SK-N-SH (cell line): ENCODE measurements at regions of chr11 and their contacts with region 1.

Region 1: DNA sequence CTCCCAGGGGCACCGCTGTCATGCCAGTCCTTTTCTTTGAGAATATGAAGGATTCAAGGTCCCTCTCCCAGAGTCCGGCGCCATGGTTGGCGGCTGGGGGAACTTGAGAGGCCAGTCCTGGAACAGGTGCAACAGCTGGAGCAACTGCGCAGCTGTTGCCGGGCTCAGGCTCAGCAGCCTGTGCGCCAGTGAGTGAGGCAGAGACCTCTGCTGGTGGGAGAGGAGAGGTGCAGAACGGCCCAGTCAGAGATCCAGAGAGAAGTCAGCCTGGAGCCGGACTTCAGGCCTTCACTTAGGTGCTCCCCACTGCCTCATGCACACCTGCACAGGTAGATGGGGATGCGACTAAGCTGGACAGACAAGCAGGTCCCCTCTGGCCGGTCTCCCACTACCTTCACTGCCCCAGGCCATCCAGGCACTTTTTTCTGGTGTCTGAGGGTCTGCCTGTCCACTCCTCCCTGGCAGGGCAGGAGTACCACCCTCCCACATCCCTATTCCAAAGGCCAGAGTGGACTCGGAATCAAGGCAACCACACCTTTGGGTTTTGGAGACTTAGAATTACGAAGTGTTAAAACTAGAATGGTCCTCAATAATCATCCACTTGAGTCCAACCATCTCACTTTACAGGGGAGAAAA is 4.6 kb downstream of the CHRDL2 start:
- DNase-seq: peak; percentile 87
- H3K4me3 ChIP-seq: peak overlapping the region in 1 of 2 experiments; percentile 17; a peak in 1 of 4 replicates
- H3K27ac ChIP-seq: no peak overlapping the region
- H3K4me1 ChIP-seq: no peaks in the 10 kb centered on the region; a peak in 1 of 4 replicates
- H3K27me3 ChIP-seq: peaks cover 24% of the 10 kb centered on the region
- CTCF ChIP-seq: peak; percentile 86
- EP300 ChIP-seq: no peak
- RAD21 ChIP-seq: peak; percentile 89

Region 2: DNA sequence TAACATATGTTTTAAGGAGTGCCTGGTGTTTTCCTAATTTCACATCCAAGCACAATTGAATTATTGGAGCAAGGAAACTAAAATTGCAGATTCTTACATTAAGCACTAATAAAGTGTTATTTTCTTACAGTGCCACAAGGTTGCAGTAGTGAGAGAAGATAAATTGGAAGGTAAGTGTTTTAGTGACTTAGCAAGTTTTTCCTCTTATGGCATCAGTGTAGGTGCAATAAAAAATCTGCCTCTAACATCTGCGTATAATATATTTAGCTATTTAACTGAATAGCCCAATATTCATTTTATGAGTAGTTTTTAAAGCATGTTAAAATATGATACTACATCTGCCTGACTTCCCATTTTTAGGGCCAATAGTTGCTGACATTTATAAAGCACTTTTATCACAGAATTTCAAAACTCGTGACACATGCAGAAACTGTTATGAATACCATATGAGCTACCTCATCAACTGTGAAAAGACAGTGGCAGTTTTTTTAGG is 115.2 kb before region 1 on chr11:
- CTCF ChIA-PET with region 1: interaction called, 26 read pairs
- POLR2A ChIA-PET with region 1: no interaction called
- DNase-seq: peak; percentile 29
- H3K4me3 ChIP-seq: no peak overlapping the region
- H3K27ac ChIP-seq: peak overlapping the region in 1 of 2 experiments; percentile 44; a peak in 2 of 4 replicates
- H3K4me1 ChIP-seq: no peaks in the 10 kb centered on the region
- H3K27me3 ChIP-seq: no peaks in the 10 kb centered on the region
- CTCF ChIP-seq: peak; percentile 71
- EP300 ChIP-seq: no peak
- RAD21 ChIP-seq: peak; percentile 51

Region 3: GRCh38 chr11:74634537-74634936 is 92.1 kb before region 1 on chr11:
- CTCF ChIA-PET with region 1: interaction called, 17 read pairs
- POLR2A ChIA-PET with region 1: no interaction called
- DNase-seq: no peak
- H3K4me3 ChIP-seq: no peak overlapping the region
- H3K27ac ChIP-seq: no peak overlapping the region
- H3K4me1 ChIP-seq: peaks cover 0 to 14% of the 10 kb centered on the region in 2 experiments; a peak in 2 of 4 replicates
- H3K27me3 ChIP-seq: no peaks in the 10 kb centered on the region
- CTCF ChIP-seq: peak; percentile 48
- EP300 ChIP-seq: no peak
- RAD21 ChIP-seq: peak; percentile 48

Region 4: GRCh38 chr11:74739546-74740270 is 13.0 kb after region 1 on chr11:
- CTCF ChIA-PET with region 1: interaction called, 27 read pairs
- POLR2A ChIA-PET with region 1: no interaction called
- DNase-seq: peak; percentile 74
- H3K4me3 ChIP-seq: no peak overlapping the region
- H3K27ac ChIP-seq: no peak overlapping the region
- H3K4me1 ChIP-seq: no peaks in the 10 kb centered on the region
- H3K27me3 ChIP-seq: no peaks in the 10 kb centered on the region
- CTCF ChIP-seq: peak; percentile 61
- EP300 ChIP-seq: no peak
- RAD21 ChIP-seq: peak; percentile 57

Region 5: GRCh38 chr11:74749128-74749964 is 22.7 kb after region 1 on chr11:
- CTCF ChIA-PET with region 1: interaction called, 14 read pairs
- POLR2A ChIA-PET with region 1: no interaction called
- DNase-seq: peak; percentile 86
- H3K4me3 ChIP-seq: peak overlapping the region; percentile 69 to 79
- H3K27ac ChIP-seq: peak overlapping the region; percentile 71 to 82
- H3K4me1 ChIP-seq: peaks cover 11% of the 10 kb centered on the region in 2 experiments; a peak in 3 of 4 replicates
- H3K27me3 ChIP-seq: no peaks in the 10 kb centered on the region
- CTCF ChIP-seq: no peak
- EP300 ChIP-seq: no peak
- RAD21 ChIP-seq: no peak